ENCODE measurements at regions of chr14 and their contacts with region 1.

Region 1: DNA sequence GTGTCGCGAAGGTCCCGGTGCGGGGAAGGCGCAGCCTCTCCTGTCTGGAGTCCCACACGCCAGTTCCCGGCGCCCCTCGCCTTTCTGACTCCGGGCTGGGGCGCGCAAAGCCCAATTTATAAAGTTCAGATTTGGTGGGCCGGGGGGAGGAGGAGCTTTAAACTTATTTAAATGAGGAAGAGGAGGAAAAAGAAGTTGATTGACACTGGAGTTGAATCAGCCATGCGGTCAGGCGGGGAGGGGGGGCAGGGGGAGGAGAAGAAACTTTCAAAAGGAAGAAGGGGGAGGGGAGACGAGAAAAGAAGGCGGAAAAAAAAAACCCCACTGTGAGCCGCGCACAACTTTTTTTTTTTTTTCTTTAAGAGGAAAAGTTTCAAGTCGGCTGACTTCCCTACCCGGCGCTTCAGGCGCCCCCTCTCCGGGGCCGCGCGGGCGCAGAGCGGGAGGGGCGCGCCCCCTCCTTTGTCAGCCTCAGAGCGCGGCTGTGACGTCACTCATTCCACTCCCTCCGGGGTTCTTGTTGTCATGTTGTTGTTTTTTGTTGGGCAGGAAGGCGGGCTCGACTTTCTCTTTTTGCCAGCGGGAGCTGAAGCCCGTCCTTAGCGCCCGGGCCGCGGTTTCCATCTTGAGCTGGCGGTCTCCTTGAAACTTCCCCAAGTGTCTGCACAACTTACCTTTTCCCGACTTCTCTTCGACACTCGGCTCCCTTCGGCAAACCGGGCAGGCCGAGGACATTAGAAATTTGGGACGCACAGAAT is at the start of gene ZFP36L1:
- DNase-seq: peak; percentile 96
- ATAC-seq: peak; percentile 58 to 68
- total RNA-seq, gene ZFP36L1: 89.6 to 105 TPM

Region 2: DNA sequence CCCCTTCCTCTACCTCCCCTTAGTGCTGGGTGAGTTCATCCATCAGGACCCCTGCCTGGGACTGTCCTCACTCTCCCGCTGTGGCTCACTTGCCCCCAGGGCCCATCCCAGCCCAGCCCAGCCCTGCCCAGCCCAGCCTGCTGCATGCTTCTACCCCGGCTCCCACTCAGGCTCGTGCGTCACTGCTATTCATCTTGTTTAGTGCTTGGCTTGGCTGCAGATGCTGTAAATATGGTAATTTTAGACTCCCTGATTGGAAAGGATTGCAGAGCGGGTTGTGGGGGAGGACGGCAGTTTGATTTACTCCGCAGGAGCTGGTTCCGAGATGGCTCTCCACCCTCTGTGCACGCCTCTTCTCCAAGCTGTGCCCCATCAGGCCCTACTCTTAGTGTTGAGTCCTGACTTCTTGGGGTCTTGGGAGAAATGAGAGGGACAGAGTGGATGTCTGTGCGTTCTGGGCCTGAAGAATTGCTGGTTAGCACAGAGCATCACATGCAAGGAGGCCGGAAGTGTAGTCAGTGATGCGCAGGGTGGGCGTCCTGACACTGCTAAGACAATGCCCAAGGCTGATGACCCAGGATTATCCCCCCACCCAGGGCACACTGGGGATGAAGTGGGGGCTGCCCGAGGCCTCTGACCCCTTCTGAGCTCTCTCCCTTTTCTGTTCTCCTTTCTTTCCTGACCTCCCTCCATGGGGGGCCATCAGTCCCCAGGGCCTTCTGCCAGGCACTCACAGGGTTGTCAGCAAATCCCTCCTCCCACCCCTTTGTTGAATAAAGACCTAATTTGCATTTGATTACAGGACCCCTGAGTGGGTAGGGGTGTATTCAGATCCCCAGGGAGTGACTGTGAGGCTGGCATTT is 244.7 kb before region 1 on chr14:
- intact Hi-C with region 1: loop called in 1 of 2 experiments (anchors 2 kb)
- DNase-seq: peak; percentile 93
- ATAC-seq: peak; percentile 89 to 90

Region 3: DNA sequence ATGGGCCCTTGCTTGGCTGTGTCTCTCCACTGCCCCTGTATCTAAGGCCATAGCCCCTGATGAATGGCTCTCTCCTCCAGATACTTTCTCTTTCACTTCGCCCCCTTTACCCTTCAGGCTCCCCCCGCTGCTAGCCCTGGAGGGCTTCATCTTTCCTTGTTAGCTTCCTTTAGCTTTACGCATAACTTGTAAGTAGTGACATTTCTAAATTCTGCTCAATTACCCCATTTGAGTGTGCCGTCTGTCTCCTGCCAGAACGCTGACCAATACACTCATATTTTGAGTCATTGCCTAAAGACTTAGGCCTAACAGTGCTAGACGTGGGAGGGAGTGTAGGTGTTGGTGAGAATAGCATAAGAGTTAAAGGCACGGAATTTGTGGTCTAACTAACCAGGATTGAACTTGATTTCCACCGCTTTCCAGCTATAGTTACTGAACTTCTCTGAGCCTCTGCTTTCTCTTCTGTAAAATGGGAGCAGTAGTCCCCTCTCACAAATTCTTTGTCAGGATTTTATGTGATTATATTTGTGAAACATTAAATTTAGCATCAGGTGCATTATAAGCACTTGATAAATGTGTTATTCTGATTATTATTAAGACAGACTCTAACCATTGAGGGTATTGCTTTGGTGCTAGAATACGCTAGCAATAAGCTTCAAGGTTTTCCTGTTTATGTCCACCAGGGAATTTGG is 129.6 kb before region 1 on chr14:
- intact Hi-C with region 1: loop called in 1 of 2 experiments (anchors 5 kb)
- DNase-seq: no peak
- ATAC-seq: peak in 1 of 2 donors; percentile 7

Region 4: GRCh38 chr14:68682166-68683103 is 110.7 kb before region 1 on chr14:
- intact Hi-C with region 1: loop called in 1 of 2 experiments (anchors 5 kb)
- DNase-seq: peak; percentile 66
- ATAC-seq: peak; percentile 77 to 81

Region 5: DNA sequence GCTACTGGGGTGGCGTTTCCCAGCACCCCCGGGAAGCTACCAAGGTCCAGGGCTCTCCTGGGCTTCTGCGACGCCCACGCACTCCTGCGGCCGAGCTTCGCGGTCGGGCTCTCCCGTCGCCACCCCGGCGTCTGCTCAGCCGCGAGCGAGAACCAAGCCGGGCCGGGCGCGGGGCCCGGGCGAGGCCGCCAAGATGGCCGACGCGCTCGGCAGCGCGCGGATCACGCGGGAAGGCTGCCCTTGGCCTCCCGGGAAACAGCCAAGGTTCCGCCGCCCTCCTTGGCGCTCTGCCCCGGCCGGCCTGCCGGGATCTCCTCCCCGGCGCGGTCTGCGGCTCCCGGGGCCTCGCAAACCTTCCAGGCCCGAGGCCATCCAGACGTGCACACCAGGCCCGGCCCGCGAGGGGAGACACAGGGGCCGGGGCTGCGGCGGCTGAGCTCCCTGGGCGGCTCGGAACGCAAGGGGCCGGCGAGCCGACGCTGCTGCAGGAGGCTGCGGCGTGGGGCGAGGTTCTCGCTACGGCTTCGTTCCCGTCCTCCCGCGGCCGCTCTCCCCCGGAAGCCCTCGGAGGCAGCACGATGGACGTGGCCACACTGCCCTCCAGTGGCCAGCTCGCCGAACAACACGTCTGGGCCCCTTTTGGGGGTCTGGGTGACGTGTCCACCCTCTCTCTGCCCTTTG is 23.2 kb after region 1 on chr14:
- intact Hi-C with region 1: loop called in 1 of 2 experiments (anchors 2 kb)
- DNase-seq: peak; percentile 93
- ATAC-seq: peak; percentile 91 to 92